ENCODE measurements at regions of chr9 and their contacts with region 1.

Region 1: DNA sequence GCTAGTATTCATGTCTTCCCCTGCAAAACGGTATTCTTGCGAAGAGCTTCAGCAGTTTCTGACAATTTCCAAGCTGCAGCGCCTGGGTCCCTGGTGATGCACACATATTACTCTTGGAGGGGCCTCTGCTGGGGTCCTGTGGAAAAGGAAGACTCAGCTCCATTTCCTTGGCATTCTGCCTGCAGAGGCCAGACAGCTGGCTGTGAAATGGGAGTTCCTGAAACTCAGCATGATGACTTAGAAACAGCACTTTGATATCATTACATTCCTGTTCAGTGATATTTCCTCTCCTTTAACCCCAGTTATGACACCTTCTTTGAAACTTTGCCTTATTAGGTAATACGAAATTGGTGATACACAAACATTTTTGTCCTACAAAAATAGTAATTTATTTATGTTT is 98.5 kb downstream of the APBA1 start:
- DNase-seq: no peak
- ATAC-seq: no peak
- H3K4me3 ChIP-seq: no peak overlapping the region
- H3K27ac ChIP-seq: no peak overlapping the region
- H3K4me1 ChIP-seq: peaks cover 0 to 14% (median 7%) of the 10 kb centered on the region in 9 donors
- H3K27me3 ChIP-seq: no peaks in the 10 kb centered on the region
- CTCF ChIP-seq: no peak

Region 2: GRCh38 chr9:69513141-69513820 is 60.4 kb before region 1 on chr9:
- intact Hi-C with region 1: no loop called
- DNase-seq: no peak
- ATAC-seq: no peak
- H3K4me3 ChIP-seq: no peak overlapping the region
- H3K27ac ChIP-seq: no peak overlapping the region
- H3K4me1 ChIP-seq: no peaks in the 10 kb centered on the region
- H3K27me3 ChIP-seq: no peaks in the 10 kb centered on the region
- CTCF ChIP-seq: no peak

Region 3: DNA sequence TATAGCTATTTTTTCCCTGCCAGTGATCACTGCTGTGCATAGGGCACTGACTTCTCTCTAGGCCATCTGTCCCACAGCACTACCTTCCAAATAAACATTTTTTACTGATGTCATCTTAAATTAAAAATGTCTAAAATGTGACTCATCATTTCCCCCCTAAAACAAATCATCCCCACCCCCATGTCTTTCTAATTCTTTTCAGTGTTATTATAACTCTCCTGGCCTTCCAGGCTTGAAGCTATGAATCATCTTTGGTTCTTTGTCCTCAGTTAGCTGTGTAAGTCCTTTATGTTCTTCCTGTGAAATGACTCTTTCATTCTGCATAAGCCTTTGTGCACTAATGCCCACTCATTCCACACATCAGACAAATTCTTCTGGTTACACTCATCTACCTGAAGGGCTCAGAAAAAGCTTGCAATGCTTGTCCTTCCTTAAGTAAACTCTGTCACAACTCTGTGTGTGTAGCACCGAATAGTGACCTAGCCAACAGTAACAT is 325.1 kb after region 1 on chr9:
- intact Hi-C with region 1: loop called in 1 of 10 experiments (anchors 10 kb)
- DNase-seq: no peak
- ATAC-seq: no peak
- H3K4me3 ChIP-seq: no peak overlapping the region
- H3K27ac ChIP-seq: no peak overlapping the region
- H3K4me1 ChIP-seq: peaks cover 0 to 3% (median 0%) of the 10 kb centered on the region in 9 donors
- H3K27me3 ChIP-seq: no peaks in the 10 kb centered on the region
- CTCF ChIP-seq: no peak